Activated CD8-positive, alpha-beta memory T cell treated with anti-CD3 and anti-CD28 coated beads, Interleukin-2, amount 10 ng/mL, durations not matched to agents 7 days and 5 days (primary cell): ENCODE measurements at regions of chr10 and their contacts with region 1.

Region 1: GRCh38 chr10:59879361-59879913 is 26.9 kb downstream of the CCDC6 start:
- DNase-seq: no peak
- ATAC-seq: peak; percentile 49
- H3K4me3 Mint-ChIP-seq: peak overlapping the region; percentile 49
- H3K27ac Mint-ChIP-seq: peak overlapping the region; percentile 76
- H3K4me1 Mint-ChIP-seq: peaks cover 69% of the 10 kb centered on the region
- H3K27me3 Mint-ChIP-seq: no peaks in the 10 kb centered on the region

Region 2: GRCh38 chr10:59865101-59865500 is 14.3 kb before region 1 on chr10:
- CTCF ChIA-PET with region 1: interaction called, 17 read pairs
- DNase-seq: no peak
- ATAC-seq: peak; percentile 73
- H3K4me3 Mint-ChIP-seq: no peak overlapping the region
- H3K27ac Mint-ChIP-seq: no peak overlapping the region
- H3K4me1 Mint-ChIP-seq: peaks cover 28% of the 10 kb centered on the region
- H3K27me3 Mint-ChIP-seq: no peaks in the 10 kb centered on the region

Region 3: DNA sequence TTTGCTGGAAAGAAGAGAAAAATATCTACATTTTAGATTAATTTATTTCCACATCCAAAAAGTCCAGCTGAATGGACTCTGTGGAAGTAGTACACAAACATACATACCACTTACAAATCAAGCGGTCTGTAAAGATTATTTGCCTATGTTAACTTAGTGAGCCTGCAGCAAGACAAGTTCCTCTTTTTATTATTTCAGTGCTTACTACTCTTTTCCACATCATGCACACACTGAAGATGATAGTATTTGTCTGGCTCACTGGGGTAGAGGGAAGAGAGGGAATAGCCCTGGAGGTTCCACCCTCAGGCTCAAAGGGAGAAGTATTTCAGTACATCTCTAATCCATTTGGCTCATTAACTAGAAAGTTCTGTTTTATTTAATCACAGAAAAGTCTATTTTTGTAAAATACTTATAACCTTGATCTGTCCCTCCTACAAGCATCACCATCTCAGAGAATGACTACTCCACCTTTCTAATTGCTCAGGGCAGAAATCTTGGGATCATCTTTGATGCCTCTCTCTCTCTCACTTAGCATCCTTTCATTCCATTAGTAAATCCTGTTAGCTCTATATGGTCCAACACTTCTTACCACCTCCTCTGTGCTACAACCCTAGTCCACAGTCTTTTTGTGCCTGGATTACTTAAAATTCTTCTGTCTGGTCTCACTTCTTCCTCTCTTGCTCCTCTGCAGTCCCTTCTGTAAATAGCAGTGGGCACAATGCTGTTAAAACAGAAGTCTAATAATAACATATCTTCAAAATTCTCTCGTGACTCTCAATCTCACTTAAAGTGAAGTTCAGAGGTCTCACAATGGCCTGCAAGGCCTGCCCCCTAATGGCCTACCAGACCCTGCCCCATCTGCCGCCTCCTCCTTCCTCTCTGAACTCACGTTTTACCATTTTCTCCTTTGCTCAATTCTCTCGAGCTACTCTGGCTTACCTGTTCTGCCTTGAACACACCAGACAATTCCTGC is 91.2 kb after region 1 on chr10:
- CTCF ChIA-PET with region 1: no interaction called
- DNase-seq: no peak
- ATAC-seq: no peak
- H3K4me3 Mint-ChIP-seq: no peak overlapping the region
- H3K27ac Mint-ChIP-seq: no peak overlapping the region
- H3K4me1 Mint-ChIP-seq: no peaks in the 10 kb centered on the region
- H3K27me3 Mint-ChIP-seq: no peaks in the 10 kb centered on the region

Region 4: DNA sequence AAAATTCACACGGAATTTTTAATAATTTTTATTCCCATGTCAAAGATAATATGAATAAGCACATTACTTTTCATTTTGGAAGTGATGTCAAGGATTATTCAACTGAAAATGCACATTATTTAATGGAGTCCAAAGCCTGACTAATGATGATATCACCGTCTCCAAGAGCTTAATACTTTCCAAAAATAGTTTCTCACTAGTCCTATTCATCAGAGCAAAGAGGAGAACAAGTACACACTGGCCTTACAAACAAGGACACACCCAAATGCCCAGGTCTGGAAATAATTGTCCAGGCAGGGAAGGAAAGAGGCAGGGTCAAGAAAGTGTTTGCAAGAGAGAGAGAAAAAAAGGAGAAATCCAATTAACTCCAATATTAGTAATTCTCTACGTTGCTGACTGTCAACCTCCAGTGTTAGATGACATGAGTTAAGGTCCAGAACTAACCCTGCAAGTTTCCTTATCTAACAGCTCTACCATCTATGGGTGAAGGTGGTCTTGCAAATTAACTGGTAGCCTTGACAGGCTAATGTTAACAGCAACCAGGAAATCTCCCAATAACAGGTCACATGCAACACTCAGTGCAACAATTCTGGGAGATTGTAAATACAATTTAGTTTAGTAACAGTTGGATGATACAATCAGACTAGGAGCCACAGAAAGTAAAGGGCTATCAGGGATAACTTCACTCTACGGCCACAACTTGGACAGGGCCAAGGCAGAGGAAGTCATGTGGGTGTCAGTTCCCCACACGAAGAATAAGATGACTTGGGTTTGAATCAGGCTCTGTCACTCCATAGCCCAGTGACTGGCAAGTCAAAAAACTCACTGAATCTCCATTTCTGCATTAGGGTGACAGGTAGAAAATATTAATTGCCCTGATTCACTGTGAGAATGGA is 244.0 kb after region 1 on chr10:
- CTCF ChIA-PET with region 1: no interaction called
- DNase-seq: no peak
- ATAC-seq: no peak
- H3K4me3 Mint-ChIP-seq: no peak overlapping the region
- H3K27ac Mint-ChIP-seq: no peak overlapping the region
- H3K4me1 Mint-ChIP-seq: no peaks in the 10 kb centered on the region
- H3K27me3 Mint-ChIP-seq: no peaks in the 10 kb centered on the region